Prostate gland (tissue), 2 donors: ENCODE measurements at regions of chr4 and their contacts with region 1.

Region 1: GRCh38 chr4:22410645-22411247 is 105.1 kb downstream of the ADGRA3 start:
- DNase-seq: no peak
- H3K4me3 ChIP-seq: no peak overlapping the region
- H3K27ac ChIP-seq: no peak overlapping the region
- H3K4me1 ChIP-seq: no peaks in the 10 kb centered on the region
- H3K27me3 ChIP-seq: no peaks in the 10 kb centered on the region
- CTCF ChIP-seq: peak in 3 of 4 experiments; percentile 49 to 68 (median 59)
- POLR2A ChIP-seq: no peak

Region 2: DNA sequence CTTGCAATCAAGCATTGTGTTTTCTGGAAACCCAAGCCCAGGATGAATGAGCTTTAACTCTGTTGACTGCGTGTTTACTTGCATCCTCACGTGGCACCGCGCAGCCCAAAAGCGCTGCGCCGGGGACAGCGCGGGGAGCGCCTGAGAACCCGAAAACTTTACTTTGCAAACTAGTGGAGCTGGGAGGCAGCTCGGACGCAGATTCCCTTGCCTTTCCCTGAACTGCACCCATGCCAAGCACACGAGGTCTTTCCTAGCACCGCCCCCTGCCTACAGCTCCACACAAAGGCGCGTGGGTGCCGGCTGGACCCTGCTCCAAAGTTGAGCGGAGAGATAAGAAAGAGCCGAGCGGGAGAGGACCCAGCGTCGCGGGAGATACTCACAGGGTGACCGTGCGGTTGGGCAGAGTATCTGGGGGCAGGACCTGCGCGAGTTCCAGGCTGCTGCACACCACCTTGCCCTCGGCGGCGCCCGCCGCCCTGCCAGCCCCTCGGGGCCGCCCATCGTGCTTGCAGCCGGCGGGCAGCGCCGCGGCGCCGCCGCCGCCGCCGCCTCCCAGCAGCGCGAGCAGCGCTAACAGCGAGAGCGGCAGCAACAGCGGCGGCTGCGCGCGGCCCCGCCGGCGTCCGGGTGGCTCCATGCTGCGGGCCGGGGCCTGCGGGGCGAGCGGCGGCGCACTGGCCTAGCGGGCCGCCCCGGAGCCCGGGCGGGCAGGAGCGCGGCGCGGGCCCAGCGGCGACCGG is 104.6 kb after region 1 on chr4:
- intact Hi-C with region 1: loop called (anchors 10 kb)
- DNase-seq: peak; percentile 73
- H3K4me3 ChIP-seq: peak overlapping the region; percentile 47 to 54
- H3K27ac ChIP-seq: peak overlapping the region; percentile 78 to 89
- H3K4me1 ChIP-seq: no peaks in the 10 kb centered on the region
- H3K27me3 ChIP-seq: no peaks in the 10 kb centered on the region
- CTCF ChIP-seq: peak in 2 of 4 experiments; percentile 28 to 34
- POLR2A ChIP-seq: peak; percentile 16

Region 3: DNA sequence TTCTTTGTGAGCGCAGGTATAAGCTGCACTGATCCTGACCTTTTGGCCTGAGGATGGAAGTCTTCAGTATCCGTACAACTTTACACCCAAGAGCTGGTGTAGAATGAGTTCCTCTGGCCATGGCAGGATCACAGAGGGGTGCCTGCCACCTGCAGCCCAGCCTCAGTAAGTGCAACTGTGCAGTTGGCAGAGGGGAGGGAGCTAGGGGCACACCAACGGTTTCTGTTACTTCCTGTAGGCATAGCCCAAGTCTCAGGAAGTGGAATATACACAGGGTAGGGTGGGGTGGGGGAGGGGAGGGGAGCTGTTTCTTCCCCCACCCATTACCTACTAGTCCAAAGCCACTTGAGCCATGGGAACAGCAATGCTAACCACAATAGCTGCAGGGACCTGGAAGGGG is 196.6 kb after region 1 on chr4:
- intact Hi-C with region 1: loop called (anchors 5 kb)
- DNase-seq: peak; percentile 22
- H3K4me3 ChIP-seq: no peak overlapping the region
- H3K27ac ChIP-seq: no peak overlapping the region
- H3K4me1 ChIP-seq: no peaks in the 10 kb centered on the region
- H3K27me3 ChIP-seq: no peaks in the 10 kb centered on the region
- CTCF ChIP-seq: peak; percentile 25 to 60 (median 52)
- POLR2A ChIP-seq: no peak

Region 4: GRCh38 chr4:22692736-22693135 is 282.0 kb after region 1 on chr4 and contains the start of gene GBA3:
- intact Hi-C with region 1: loop called (anchors 5 kb)
- DNase-seq: no peak
- H3K4me3 ChIP-seq: no peak within 1 kb of the TSS
- H3K27ac ChIP-seq: no peak within 1 kb of the TSS
- H3K4me1 ChIP-seq: no peaks in the 10 kb centered on the region
- H3K27me3 ChIP-seq: no peaks in the 10 kb centered on the region
- CTCF ChIP-seq: no peak
- POLR2A ChIP-seq: no peak
- total RNA-seq, gene GBA3: 0.68 to 0.97 TPM

Region 5: DNA sequence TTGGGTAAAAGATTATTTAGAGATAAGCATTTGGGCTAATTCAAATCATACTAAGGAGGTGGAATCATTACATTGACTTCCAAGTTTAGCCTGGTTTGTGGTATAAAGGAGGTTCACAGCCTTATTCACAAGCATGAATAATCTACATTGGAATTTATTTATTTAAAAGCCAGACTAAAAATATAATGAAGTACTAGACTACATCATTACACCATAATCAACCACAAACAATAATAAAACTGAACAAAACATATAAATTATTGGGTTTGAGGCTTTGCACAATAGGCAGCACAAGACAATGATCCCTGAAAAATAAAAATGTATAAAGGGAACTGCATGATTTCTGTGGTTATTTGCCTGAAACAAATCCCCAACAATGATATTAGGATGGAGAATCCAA is 596.0 kb after region 1 on chr4:
- intact Hi-C with region 1: no loop called
- DNase-seq: no peak
- H3K4me3 ChIP-seq: no peak overlapping the region
- H3K27ac ChIP-seq: no peak overlapping the region
- H3K4me1 ChIP-seq: no peaks in the 10 kb centered on the region
- H3K27me3 ChIP-seq: no peaks in the 10 kb centered on the region
- CTCF ChIP-seq: no peak
- POLR2A ChIP-seq: no peak